ENCODE measurements at regions of chr3 and their contacts with region 1.

Region 1: DNA sequence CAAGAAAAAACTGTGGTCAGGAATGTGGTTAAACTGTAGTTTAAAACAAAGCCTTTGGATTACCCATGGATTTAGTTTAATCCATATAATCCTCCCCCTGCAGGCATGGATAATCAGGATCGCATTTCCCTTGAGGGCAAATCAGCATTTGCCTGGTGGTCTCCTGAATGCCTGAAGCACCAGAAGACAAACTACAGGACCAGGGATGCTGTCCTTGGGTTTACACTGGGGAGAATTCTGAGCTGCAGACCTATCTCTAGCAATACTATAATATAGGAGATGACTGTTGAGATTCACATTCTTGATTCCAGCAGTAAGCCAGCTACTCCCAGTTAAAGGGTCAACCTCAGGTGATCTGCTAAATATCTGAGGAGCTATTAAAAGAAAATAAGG is 10.6 kb downstream of the PIK3CB start:
- DNase-seq: no peak
- ATAC-seq: peak; percentile 69
- H3K4me3 ChIP-seq: no peak overlapping the region
- H3K27ac ChIP-seq: peak overlapping the region; percentile 67
- H3K4me1 ChIP-seq: peaks cover 50% of the 10 kb centered on the region
- H3K27me3 ChIP-seq: no peaks in the 10 kb centered on the region; a peak in 1 of 5 replicates
- CTCF ChIP-seq: no peak
- EP300 ChIP-seq: no peak
- POLR2A ChIP-seq: no peak
- RAD21 ChIP-seq: no peak

Region 2: DNA sequence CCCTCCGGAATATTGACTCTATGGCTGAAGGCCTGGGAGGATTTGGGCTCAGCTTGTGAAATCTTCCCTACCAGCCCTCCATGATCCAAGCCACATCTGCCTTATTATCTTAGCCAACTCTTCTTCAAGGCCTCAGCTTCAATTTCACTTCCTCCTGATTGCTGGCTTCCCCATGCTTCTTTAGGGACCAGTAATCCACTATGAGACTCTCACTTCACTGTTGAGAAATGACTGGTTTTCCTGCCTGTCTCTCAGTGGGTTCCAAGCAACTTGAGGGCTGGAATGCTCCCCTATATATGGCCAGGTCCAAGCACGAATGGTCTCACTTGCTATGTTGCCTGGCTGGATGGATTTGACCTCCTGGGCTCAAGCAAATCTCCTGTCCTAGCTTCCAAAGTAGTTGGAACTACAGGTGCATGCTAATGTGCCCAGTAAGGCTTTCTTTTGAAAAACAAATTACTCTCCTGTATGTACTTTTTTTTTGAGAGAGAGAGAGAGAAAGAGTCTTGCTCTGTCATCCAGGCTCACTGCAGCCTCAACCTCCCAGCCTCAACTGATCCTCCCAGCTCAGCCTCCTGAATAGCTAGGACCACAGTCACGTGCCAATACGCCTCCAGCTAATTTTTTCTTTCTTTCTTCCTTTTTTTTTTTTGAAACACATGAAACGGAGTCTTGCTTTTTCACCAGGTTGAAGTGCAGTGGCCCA is 18.5 kb after region 1 on chr3:
- CTCF ChIA-PET with region 1: no interaction called
- POLR2A ChIA-PET with region 1: interaction called, 13 read pairs
- in situ Hi-C with region 1: no loop called
- intact Hi-C with region 1: no loop called
- DNase-seq: no peak
- ATAC-seq: no peak; the same call in 2 of the 3 replicates
- H3K4me3 ChIP-seq: no peak overlapping the region
- H3K27ac ChIP-seq: no peak overlapping the region
- H3K4me1 ChIP-seq: peaks cover 52% of the 10 kb centered on the region
- H3K27me3 ChIP-seq: no peaks in the 10 kb centered on the region
- CTCF ChIP-seq: no peak
- EP300 ChIP-seq: no peak
- POLR2A ChIP-seq: no peak
- RAD21 ChIP-seq: no peak